IMR-90 (cell line): ENCODE measurements at regions of chr4 and their contacts with region 1.

Region 1: DNA sequence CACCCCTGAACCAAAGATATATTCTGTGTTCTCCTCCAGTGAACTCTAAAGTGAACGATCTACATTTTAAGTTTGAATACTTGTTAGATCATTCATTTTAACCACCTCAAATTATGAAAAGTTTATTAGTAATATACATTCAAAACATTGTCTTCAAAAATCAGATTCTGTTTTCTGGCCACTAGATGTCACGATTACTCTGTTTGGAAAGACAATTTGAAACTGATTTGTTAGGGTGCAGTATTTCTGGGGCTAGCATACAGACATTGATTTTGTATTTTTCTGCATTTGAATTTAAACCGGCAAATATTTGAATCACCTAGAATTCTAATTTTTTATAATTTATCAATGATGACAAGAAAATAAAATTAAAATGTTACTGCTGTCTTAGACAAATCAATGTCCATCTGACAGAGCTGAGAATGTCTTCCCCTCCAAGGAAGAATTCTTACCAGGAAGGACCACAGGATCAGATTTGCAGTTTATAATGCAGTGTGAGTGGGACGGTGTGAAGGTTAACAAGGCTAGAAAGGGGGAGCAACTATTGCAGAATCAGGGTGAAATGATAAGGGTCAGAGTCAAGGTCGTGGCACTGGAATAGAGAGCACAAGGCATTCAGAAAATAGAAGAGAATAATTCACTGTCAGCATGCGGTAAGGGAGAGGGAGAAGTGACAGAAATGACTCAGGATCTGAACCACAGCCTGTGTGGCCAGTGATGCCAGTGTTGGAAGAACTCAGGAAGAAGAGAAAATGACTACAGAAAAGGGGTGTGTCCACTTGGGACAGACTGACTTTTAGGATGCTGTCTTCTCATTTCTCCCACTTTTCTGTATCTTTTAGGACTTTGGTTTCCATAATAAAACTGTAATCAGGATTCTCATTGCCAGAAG is 91.6 kb downstream of the ANXA10 start:
- DNase-seq: peak; percentile 59
- ATAC-seq: peak; percentile 61
- H3K4me3 ChIP-seq: no peak overlapping the region
- H3K27ac ChIP-seq: no peak overlapping the region
- H3K4me1 ChIP-seq: no peaks in the 10 kb centered on the region
- H3K27me3 ChIP-seq: no peaks in the 10 kb centered on the region
- CTCF ChIP-seq: peak; percentile 66
- POLR2A ChIP-seq: no peak
- RAD21 ChIP-seq: peak; percentile 80

Region 2: DNA sequence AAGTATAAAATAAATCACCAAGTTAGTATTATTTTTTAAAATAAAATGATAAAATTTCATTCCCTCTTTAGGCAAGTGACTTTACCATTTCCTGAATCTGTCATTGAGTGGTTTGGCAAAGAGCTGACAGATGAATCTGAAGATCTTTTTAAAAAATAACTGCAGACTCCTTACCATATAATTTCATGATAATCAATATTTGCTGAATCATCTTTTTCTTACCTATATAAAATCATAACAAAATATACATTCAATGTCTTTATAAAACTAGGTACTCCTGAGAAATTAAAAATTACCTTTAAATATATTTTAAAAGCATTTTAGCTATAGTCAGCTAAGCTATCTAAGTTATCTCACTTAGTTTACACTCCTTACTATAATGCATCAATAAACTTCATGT is 74.4 kb before region 1 on chr4:
- CTCF ChIA-PET with region 1: no interaction called
- POLR2A ChIA-PET with region 1: no interaction called
- dilution Hi-C with region 1: no loop called
- in situ Hi-C with region 1: no loop called
- intact Hi-C with region 1: no loop called
- DNase-seq: no peak
- ATAC-seq: no peak
- H3K4me3 ChIP-seq: no peak overlapping the region
- H3K27ac ChIP-seq: no peak overlapping the region
- H3K4me1 ChIP-seq: no peaks in the 10 kb centered on the region
- H3K27me3 ChIP-seq: no peaks in the 10 kb centered on the region
- CTCF ChIP-seq: no peak
- POLR2A ChIP-seq: no peak
- RAD21 ChIP-seq: no peak

Region 3: GRCh38 chr4:168199260-168199957 is 15.4 kb after region 1 on chr4:
- CTCF ChIA-PET with region 1: interaction called, 13 read pairs
- POLR2A ChIA-PET with region 1: no interaction called
- dilution Hi-C with region 1: no loop called
- in situ Hi-C with region 1: no loop called
- intact Hi-C with region 1: no loop called
- DNase-seq: no peak
- ATAC-seq: no peak
- H3K4me3 ChIP-seq: no peak overlapping the region
- H3K27ac ChIP-seq: no peak overlapping the region
- H3K4me1 ChIP-seq: no peaks in the 10 kb centered on the region; the same call in 1 of the 2 replicates
- H3K27me3 ChIP-seq: no peaks in the 10 kb centered on the region
- CTCF ChIP-seq: no peak
- POLR2A ChIP-seq: no peak
- RAD21 ChIP-seq: no peak

Region 4: GRCh38 chr4:168514249-168514852 is 330.4 kb after region 1 on chr4:
- CTCF ChIA-PET with region 1: no interaction called
- POLR2A ChIA-PET with region 1: no interaction called
- dilution Hi-C with region 1: no loop called
- in situ Hi-C with region 1: loop called (anchors 25 kb)
- intact Hi-C with region 1: loop called (anchors 10 kb)
- DNase-seq: peak; percentile 50
- ATAC-seq: no peak
- H3K4me3 ChIP-seq: no peak overlapping the region
- H3K27ac ChIP-seq: no peak overlapping the region
- H3K4me1 ChIP-seq: peaks cover 5% of the 10 kb centered on the region
- H3K27me3 ChIP-seq: no peaks in the 10 kb centered on the region
- CTCF ChIP-seq: peak; percentile 54
- POLR2A ChIP-seq: no peak
- RAD21 ChIP-seq: peak; percentile 60

Region 5: DNA sequence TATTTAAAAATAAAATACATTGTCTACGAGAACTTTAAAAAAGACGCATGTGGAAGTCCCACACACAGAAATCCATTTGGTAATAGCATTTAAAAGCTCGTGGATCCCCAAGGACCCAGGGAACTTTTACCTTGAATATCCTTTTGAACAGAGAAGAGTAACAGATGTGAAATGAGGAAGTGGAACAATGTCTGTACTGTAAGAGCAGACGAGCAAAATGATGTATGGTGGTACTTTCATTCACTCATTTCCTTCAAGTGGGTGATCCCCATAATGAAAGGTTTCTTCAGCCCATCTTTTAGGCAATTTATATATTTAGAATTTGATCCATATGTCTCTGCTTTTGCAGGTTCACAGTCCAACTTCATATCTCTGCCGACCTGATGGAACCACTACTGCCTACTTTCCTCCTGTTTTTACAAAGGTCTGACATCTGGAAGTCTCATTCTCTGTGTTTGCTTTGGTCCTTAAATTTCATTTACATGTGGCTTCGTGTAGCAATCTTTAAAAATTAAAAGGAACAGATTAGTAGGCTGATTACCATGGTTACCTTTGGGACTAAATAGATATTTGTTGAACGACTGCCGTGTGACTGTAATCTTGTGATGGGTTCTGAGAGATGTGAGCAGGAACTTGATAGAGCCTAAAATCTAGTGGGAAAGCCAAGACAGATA is 501.3 kb after region 1 on chr4:
- CTCF ChIA-PET with region 1: no interaction called
- POLR2A ChIA-PET with region 1: no interaction called
- dilution Hi-C with region 1: no loop called
- in situ Hi-C with region 1: loop called (anchors 25 kb)
- intact Hi-C with region 1: no loop called
- DNase-seq: no peak
- ATAC-seq: no peak
- H3K4me3 ChIP-seq: no peak overlapping the region
- H3K27ac ChIP-seq: no peak overlapping the region
- H3K4me1 ChIP-seq: peaks cover 4% of the 10 kb centered on the region
- H3K27me3 ChIP-seq: no peaks in the 10 kb centered on the region
- CTCF ChIP-seq: no peak
- POLR2A ChIP-seq: no peak
- RAD21 ChIP-seq: no peak

Region 6: DNA sequence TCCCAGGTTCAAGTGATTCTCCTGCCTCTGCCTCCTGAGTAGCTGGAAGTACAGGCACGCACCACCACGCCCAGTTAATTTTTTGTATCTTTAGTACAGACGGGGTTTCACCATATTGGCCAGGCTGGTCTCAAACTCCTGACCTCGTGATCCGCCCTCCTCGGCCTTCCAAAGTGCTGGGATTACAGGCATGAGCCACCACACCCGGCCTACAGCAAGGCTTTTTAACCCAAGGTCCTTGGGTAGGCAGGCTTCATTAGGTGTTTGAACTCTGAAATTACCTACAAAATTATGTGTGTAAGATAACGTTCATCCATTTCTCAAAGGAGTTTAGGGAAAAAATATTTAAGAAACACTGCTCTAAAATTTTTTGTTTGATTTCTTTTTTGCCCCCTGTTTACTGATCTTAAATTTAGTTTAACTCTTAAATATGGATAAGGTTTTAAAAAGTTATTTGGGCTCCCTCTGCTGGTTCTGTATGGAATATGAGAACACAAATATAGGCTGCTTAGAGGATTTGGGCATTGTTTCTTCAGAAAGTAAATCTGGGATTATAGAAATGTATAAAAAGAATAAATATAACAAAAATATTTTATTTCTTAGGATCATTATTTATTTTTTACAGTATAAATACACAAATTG is 733.3 kb after region 1 on chr4:
- CTCF ChIA-PET with region 1: no interaction called
- POLR2A ChIA-PET with region 1: no interaction called
- dilution Hi-C with region 1: no loop called
- in situ Hi-C with region 1: loop called (anchors 10 kb)
- intact Hi-C with region 1: loop called (anchors 5 kb)
- DNase-seq: peak; percentile 54
- ATAC-seq: peak; percentile 46
- H3K4me3 ChIP-seq: no peak overlapping the region
- H3K27ac ChIP-seq: no peak overlapping the region
- H3K4me1 ChIP-seq: peaks cover 2% of the 10 kb centered on the region; the same call in 1 of the 2 replicates
- H3K27me3 ChIP-seq: no peaks in the 10 kb centered on the region
- CTCF ChIP-seq: peak; percentile 52
- POLR2A ChIP-seq: no peak
- RAD21 ChIP-seq: peak; percentile 50

Region 7: GRCh38 chr4:169485791-169486742 is 1302.1 kb after region 1 on chr4:
- CTCF ChIA-PET with region 1: no interaction called
- POLR2A ChIA-PET with region 1: no interaction called
- dilution Hi-C with region 1: no loop called
- in situ Hi-C with region 1: loop called (anchors 25 kb)
- intact Hi-C with region 1: no loop called
- DNase-seq: peak; percentile 71
- ATAC-seq: peak; percentile 70
- H3K4me3 ChIP-seq: no peak overlapping the region
- H3K27ac ChIP-seq: no peak overlapping the region; the same call in 1 of the 2 replicates
- H3K4me1 ChIP-seq: peaks cover 3% of the 10 kb centered on the region
- H3K27me3 ChIP-seq: no peaks in the 10 kb centered on the region
- CTCF ChIP-seq: peak; percentile 77
- POLR2A ChIP-seq: no peak
- RAD21 ChIP-seq: peak; percentile 86